PC-9 (cell line): ENCODE measurements at regions of chr1 and their contacts with region 1.

Region 1: DNA sequence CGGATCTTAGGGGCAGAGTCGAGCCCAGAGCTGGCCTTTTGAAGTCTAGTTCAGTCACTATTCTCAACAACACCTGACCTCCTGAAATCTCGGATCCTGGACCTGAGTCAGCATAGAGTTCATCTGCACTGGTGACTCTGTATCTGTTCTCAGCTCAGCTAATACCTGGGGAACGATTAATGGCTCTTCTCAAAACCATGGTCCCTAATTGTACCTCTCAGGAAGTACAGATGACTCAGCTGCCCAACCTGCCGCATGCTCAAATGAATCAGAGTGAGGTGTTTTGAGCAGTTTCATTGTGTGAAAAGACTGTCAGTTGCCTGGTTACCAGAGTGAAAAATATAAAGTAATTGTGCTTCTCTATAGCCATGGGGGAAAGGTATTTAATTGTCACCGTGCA is 89.2 kb downstream of the SLC35F3 start:
- DNase-seq: peak; percentile 69 to 96
- H3K4me3 ChIP-seq: no peak overlapping the region
- H3K27ac ChIP-seq: peak overlapping the region; percentile 84
- H3K4me1 ChIP-seq: peaks cover 30% of the 10 kb centered on the region
- H3K27me3 ChIP-seq: no peaks in the 10 kb centered on the region
- CTCF ChIP-seq: no peak

Region 2: DNA sequence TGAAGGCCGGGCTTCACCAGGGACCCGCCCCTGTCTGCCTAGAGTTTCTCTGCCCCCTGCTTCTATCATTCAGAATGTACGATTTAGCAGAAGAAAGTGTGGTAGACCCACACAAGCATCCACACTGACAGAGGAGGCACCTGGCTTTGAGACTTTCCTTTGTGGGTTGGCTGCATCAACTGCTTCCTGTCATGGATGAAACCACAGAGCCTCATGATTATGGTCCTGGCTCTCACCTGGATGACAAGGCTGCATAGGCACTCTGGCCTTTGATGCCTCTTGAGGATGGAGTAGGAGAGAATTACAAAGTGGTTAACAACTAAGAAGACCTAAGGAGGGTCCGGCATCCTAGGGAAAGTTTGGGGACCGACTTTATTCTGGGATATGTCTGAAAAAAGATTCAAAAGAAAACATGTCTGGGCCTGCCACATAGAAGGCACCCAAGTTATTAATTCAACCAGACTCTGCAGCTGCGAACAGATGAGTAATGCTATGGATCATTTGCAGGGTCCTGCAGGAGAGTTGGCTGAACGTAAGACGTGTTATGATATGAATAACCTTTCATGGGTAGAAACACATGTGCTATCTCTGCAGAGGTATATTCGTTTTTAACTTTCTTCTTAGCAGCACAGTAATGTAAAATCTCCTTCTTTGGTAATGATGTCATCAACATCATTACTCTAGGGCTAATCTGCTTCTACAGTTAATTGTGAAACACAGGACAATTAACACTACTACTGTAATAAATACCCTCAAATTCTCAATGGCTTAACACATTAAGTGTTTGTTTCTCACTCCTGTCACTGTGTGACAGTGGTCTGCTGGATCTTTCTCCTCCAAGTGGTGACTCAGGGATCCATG is 47.0 kb after region 1 on chr1:
- CTCF ChIA-PET with region 1: no interaction called
- POLR2A ChIA-PET with region 1: no interaction called
- intact Hi-C with region 1: no loop called
- DNase-seq: no peak
- H3K4me3 ChIP-seq: no peak overlapping the region
- H3K27ac ChIP-seq: no peak overlapping the region
- H3K4me1 ChIP-seq: no peaks in the 10 kb centered on the region
- H3K27me3 ChIP-seq: no peaks in the 10 kb centered on the region
- CTCF ChIP-seq: no peak

Region 3: DNA sequence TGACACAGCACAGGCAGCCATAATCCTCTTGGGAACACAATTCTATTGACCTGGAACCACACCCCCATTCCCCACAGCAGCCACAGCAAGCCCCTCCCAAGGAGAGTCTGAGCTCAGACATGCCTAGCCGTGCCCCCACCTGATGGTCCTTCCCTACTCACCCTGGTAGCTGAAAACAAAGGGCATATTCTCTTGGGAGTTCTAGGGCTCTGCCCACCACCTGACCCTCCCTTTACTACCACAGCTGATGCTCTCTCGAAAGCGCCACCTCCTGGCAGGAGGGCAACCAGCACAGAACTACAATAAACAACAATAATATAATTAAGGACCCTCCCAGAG is 194.8 kb after region 1 on chr1:
- CTCF ChIA-PET with region 1: interaction called, 13 read pairs
- POLR2A ChIA-PET with region 1: no interaction called
- intact Hi-C with region 1: no loop called
- DNase-seq: peak in 1 of 2 experiments; percentile 3
- H3K4me3 ChIP-seq: no peak overlapping the region
- H3K27ac ChIP-seq: no peak overlapping the region
- H3K4me1 ChIP-seq: peaks cover 23% of the 10 kb centered on the region
- H3K27me3 ChIP-seq: no peaks in the 10 kb centered on the region
- CTCF ChIP-seq: no peak; the same call in 1 of the 2 replicates